ENCODE measurements at regions of chr6 and their contacts with region 1.

Region 1: DNA sequence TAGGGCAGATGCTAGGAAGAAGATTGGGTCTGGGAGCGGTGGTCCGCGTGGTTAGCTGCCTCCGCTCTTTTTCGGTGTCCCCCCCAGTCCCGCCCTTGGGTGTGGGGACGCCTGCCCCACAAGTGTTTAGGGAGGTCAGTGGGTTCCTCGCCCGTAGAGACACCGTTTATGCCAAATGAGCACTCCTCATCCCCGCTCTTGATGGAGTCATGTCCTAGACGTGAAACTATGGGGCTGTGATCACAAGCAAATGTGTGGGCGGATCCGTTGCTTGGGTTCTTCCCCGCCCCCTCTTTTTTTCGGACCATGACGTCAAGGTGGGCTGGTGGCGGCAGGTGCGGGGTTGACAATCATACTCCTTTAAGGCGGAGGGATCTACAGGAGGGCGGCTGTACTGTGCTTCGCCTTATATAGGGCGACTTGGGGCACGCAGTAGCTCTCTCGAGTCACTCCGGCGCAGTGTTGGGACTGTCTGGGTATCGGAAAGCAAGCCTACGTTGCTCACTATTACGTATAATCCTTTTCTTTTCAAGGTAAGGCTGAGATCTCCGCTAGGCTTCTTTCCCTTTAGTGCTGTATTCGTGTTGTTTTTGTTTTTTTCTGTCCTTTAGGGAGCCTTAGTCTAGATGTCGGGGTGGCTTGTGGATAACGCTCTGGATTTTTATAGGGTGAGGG is at the start of gene HSP90AB1:
- DNase-seq: peak; percentile 88
- ATAC-seq: peak; percentile 75
- H3K4me3 Mint-ChIP-seq: peak within 1 kb of the TSS; percentile 99
- H3K27ac Mint-ChIP-seq: peak within 1 kb of the TSS; percentile 99
- H3K4me1 Mint-ChIP-seq: peaks cover 56% of the 10 kb centered on the region
- H3K27me3 Mint-ChIP-seq: no peaks in the 10 kb centered on the region
- CTCF ChIP-seq: no peak
- total RNA-seq, gene HSP90AB1: 1,222 and 1,311 TPM in 2 replicates

Region 2: DNA sequence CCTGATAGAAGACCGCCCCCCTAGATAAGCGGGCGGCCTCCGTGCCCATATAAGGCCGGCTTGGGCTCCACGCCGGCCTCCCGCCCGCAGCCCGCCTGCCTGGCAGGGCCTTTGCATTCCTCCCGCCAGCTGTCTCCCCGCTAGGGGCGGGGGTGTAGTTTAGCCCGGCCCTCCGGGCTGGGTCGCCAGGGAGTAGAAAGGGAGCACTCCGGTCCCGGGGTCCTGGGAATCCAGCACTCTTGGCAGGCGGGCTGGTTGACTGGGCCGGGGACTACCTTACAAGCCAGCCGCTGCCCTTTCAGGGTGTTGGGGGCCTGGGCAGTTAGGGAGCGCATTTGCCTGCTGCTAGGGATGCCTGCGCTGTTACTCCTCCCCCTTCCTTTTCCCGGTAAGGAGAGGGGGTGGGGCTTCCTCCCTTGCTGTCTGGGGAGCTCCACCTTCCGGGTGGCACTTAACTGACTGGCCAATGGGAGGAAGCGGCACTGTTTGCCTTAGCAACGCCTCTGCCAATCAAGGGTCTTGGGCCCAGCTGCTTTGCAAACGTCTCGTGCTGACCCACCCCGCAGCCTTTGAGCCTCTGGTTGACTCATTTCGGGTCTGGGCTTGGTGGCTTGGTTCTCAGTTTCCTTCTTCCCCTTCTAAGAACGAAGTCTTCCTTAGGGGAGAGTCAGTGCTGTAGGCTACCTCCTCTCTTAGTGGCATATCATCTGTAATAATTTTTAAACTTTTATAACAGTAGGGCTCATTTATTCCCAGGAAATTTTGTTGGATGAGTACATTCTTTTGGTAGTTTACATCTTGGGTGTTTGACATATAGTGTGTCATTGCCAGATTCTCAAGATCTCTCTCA is 1072.3 kb before region 1 on chr6:
- CTCF ChIA-PET with region 1: no interaction called
- POLR2A ChIA-PET with region 1: no interaction called
- intact Hi-C with region 1: no loop called
- DNase-seq: peak; percentile 77
- ATAC-seq: peak; percentile 71
- H3K4me3 Mint-ChIP-seq: peak overlapping the region; percentile 73
- H3K27ac Mint-ChIP-seq: peak overlapping the region; percentile 90
- H3K4me1 Mint-ChIP-seq: peaks cover 48% of the 10 kb centered on the region
- H3K27me3 Mint-ChIP-seq: no peaks in the 10 kb centered on the region
- CTCF ChIP-seq: no peak

Region 3: DNA sequence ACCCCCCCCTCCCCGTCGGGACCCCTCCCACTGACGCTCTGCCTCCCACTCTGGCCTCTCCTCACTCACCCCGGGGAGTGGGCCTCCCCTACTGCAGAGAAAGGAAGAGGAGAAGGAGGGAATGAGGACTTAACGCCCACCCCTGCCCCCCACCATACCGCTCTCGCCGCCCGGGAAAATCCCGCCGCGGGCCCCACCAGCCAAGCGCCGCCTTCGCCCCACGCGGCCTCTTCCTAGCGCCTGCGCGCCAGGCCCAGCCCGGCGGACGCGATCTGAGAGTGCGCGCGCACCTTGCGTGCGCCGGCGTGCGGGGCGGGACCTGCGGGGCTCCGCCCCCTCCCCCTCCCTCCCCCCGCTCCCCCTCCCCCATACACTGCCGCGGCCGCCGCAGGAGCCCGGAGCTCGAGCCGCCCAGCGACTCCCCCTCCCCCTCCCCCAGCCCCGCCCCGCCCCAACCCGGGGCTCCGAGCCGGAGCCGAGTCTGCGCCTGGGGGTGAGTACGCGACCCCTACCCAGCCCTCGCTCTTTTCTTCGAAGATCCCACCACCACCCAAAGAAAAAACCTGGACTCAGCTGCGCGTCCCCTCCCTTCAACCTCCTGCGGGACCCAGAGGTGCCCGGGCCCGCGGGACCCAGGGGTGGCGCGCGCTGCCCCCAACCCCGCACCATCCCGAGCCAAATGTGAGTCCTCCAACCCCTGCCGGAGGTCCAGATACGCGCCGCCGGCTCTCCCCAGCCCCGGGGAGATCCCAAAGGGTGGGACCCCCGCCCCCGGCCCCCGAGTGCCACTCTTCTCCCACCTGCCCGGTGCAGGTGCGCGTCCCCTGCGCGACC is 119.4 kb before region 1 on chr6 and contains the starts of genes MRPL14 and TMEM63B:
- CTCF ChIA-PET with region 1: no interaction called
- POLR2A ChIA-PET with region 1: interaction called, 11 read pairs
- intact Hi-C with region 1: loop called (anchors 2 kb)
- DNase-seq: peak; percentile 89
- ATAC-seq: peak; percentile 87
- H3K4me3 Mint-ChIP-seq: peak within 1 kb of the TSS; percentile 93
- H3K27ac Mint-ChIP-seq: peak within 1 kb of the TSS; percentile 95
- H3K4me1 Mint-ChIP-seq: peaks cover 50% of the 10 kb centered on the region
- H3K27me3 Mint-ChIP-seq: no peaks in the 10 kb centered on the region
- CTCF ChIP-seq: no peak
- total RNA-seq, gene MRPL14: 40.5 and 45.5 TPM in 2 replicates
- total RNA-seq, gene TMEM63B: 12.3 and 13.9 TPM in 2 replicates

Region 4: GRCh38 chr6:44172731-44173500 is 73.9 kb before region 1 on chr6:
- CTCF ChIA-PET with region 1: interaction called, 3 read pairs
- POLR2A ChIA-PET with region 1: interaction called, 15 read pairs
- intact Hi-C with region 1: no loop called
- DNase-seq: peak; percentile 63
- ATAC-seq: peak; percentile 75
- H3K4me3 Mint-ChIP-seq: no peak overlapping the region
- H3K27ac Mint-ChIP-seq: no peak overlapping the region
- H3K4me1 Mint-ChIP-seq: peaks cover 14% of the 10 kb centered on the region
- H3K27me3 Mint-ChIP-seq: peaks cover 7% of the 10 kb centered on the region
- CTCF ChIP-seq: no peak

Region 5: GRCh38 chr6:44221291-44221960 is 25.4 kb before region 1 on chr6:
- CTCF ChIA-PET with region 1: no interaction called
- POLR2A ChIA-PET with region 1: interaction called, 49 read pairs
- intact Hi-C with region 1: loop called (anchors 1 kb)
- DNase-seq: peak; percentile 53
- ATAC-seq: peak; percentile 51
- H3K4me3 Mint-ChIP-seq: no peak overlapping the region
- H3K27ac Mint-ChIP-seq: no peak overlapping the region
- H3K4me1 Mint-ChIP-seq: peaks cover 39% of the 10 kb centered on the region
- H3K27me3 Mint-ChIP-seq: no peaks in the 10 kb centered on the region
- CTCF ChIP-seq: no peak

Region 6: GRCh38 chr6:44257025-44257752 is 10.4 kb after region 1 on chr6 and contains the start of gene SLC35B2:
- CTCF ChIA-PET with region 1: interaction called, 11 read pairs
- POLR2A ChIA-PET with region 1: interaction called, 549 read pairs
- intact Hi-C with region 1: loop called (anchors 1 kb)
- DNase-seq: peak; percentile 74
- ATAC-seq: peak; percentile 53
- H3K4me3 Mint-ChIP-seq: peak within 1 kb of the TSS; percentile 92
- H3K27ac Mint-ChIP-seq: peak within 1 kb of the TSS; percentile 99
- H3K4me1 Mint-ChIP-seq: peaks cover 88% of the 10 kb centered on the region
- H3K27me3 Mint-ChIP-seq: no peaks in the 10 kb centered on the region
- CTCF ChIP-seq: no peak
- total RNA-seq, gene SLC35B2: 27.0 and 29.1 TPM in 2 replicates

Region 7: DNA sequence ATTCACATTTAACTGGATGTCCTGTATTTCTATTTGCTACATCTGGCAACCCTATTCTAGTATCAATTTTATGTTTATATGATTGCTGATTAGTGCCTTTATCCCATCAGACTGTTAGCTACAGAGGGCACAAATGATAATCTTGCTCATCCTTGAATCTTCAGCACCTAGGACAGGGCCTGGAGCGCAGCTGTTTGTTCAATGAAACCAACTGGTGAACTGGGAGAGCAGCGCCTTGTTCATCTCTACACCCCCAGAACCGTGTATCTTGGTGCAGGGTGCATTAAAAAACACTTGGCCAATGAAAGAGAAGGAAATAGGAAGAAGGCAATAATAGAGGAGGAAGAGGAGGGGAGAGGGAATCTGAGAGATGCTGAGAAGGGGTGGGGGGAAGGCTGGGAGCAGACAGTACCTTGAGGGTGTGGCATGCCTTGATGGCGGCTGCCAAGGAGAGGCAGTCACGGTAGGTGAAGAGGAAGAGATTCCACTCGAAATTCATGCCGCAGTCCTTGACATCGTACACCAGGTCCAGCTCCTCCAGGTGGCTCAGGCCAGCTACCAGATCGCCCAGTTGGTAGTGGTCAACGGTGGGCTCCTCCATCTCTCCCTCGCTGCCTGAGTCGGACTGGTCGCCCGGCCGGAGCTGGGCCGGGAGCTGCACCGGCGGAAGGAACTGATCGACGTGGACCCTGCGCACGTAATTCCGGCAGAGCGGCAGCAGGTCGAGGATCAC is 38.9 kb after region 1 on chr6:
- CTCF ChIA-PET with region 1: no interaction called
- POLR2A ChIA-PET with region 1: no interaction called
- intact Hi-C with region 1: no loop called
- DNase-seq: no peak
- ATAC-seq: no peak
- H3K4me3 Mint-ChIP-seq: no peak overlapping the region
- H3K27ac Mint-ChIP-seq: no peak overlapping the region
- H3K4me1 Mint-ChIP-seq: no peaks in the 10 kb centered on the region
- H3K27me3 Mint-ChIP-seq: peaks cover 53% of the 10 kb centered on the region
- CTCF ChIP-seq: no peak

Region 8: GRCh38 chr6:44312901-44313788 is 66.3 kb after region 1 on chr6 and contains the start of gene AARS2:
- CTCF ChIA-PET with region 1: interaction called, 3 read pairs
- POLR2A ChIA-PET with region 1: interaction called, 18 read pairs
- intact Hi-C with region 1: loop called (anchors 2 kb)
- DNase-seq: peak; percentile 94
- ATAC-seq: peak; percentile 96
- H3K4me3 Mint-ChIP-seq: peak within 1 kb of the TSS; percentile 96
- H3K27ac Mint-ChIP-seq: peak within 1 kb of the TSS; percentile 91
- H3K4me1 Mint-ChIP-seq: peaks cover 14% of the 10 kb centered on the region
- H3K27me3 Mint-ChIP-seq: peaks cover 6% of the 10 kb centered on the region
- CTCF ChIP-seq: peak; percentile 85
- total RNA-seq, gene AARS2: 19.1 and 22.4 TPM in 2 replicates

Region 9: DNA sequence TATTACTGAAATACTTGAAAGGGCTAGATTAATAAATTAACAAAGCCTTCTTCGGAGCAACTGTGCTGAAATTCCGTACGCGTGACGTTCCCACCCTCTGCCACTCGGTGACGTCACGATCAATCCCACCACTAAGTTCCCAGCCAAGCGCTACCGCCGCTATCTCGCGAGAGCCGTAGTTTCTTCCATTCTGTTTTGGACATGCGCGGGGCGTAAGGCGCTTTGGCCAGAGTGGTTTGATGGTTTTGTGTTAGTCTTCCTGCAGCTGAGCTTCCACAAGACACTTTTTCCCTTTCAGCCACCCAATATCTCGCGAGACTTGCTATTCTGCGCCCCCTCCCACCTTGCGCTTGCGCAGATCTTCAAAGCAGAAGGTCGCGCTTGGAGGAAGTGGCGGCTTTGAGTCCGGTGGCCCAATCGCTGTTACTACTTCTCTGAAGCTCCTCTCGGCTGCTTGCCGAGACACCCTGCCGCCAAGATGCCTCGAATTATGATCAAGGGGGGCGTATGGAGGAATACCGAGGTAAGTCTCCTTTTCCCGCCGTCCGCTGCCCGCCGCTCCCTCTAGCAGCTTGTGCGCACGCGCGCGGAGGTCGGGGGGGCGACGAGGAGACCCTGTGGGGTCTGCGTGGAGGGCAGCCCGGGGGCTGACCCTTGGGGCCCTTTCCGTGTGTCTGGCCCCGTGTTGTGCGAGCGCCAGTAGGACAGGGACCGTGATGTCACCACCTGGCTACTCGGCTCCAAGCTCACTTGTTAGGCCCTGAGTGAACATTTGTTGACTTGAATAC is 140.7 kb after region 1 on chr6 and contains the start of gene CDC5L:
- CTCF ChIA-PET with region 1: no interaction called
- POLR2A ChIA-PET with region 1: interaction called, 13 read pairs
- intact Hi-C with region 1: no loop called
- DNase-seq: peak; percentile 82
- ATAC-seq: peak; percentile 91
- H3K4me3 Mint-ChIP-seq: peak within 1 kb of the TSS; percentile 94
- H3K27ac Mint-ChIP-seq: peak within 1 kb of the TSS; percentile 96
- H3K4me1 Mint-ChIP-seq: peaks cover 41% of the 10 kb centered on the region
- H3K27me3 Mint-ChIP-seq: no peaks in the 10 kb centered on the region
- CTCF ChIP-seq: no peak
- total RNA-seq, gene CDC5L: 20.0 and 20.2 TPM in 2 replicates

Region 10: GRCh38 chr6:44489910-44490604 is 243.3 kb after region 1 on chr6:
- CTCF ChIA-PET with region 1: no interaction called
- POLR2A ChIA-PET with region 1: no interaction called
- intact Hi-C with region 1: no loop called
- DNase-seq: no peak
- ATAC-seq: no peak
- H3K4me3 Mint-ChIP-seq: no peak overlapping the region
- H3K27ac Mint-ChIP-seq: no peak overlapping the region
- H3K4me1 Mint-ChIP-seq: no peaks in the 10 kb centered on the region
- H3K27me3 Mint-ChIP-seq: peaks cover 11% of the 10 kb centered on the region
- CTCF ChIP-seq: no peak

Region 11: DNA sequence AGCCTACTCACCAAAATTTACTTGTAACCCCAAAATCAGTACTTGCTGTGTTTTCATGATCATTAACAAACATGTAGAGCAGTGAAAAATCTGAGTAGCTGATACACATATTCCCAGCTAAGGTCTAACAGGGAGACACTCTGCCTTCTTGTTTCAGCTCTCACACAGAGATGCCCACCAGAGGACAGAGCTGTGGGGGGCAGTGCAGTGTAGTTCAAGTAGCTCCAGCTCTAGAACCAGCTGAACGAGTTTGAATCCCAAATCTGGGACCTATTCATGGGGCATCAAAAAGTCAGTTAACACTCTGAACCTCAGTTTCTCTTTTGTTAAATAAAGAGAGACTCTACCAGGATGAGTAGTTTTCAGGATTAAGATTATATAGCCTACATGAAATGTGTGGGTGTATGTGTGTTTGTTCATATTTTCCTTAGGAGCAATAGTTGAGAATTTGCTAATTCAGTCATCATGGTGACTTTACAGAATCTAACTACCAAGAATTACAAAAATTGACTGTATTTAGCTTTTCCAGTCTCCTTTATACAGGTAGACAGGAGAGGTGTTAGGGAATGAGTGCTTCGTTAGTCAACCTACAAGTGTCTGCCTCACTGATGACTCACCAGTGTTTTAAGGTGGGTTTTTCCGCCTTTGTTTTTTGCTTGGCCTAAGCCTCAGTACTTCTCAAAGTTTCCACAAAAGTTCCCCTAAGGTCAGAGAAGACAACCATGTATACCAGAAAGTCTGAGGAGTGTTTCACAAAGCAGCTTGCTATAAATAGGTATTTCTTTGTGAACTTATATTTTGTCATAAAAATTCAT is 917.4 kb after region 1 on chr6:
- CTCF ChIA-PET with region 1: no interaction called
- POLR2A ChIA-PET with region 1: no interaction called
- intact Hi-C with region 1: no loop called
- DNase-seq: no peak
- ATAC-seq: peak; percentile 77
- H3K4me3 Mint-ChIP-seq: no peak overlapping the region
- H3K27ac Mint-ChIP-seq: no peak overlapping the region
- H3K4me1 Mint-ChIP-seq: peaks cover 12% of the 10 kb centered on the region
- H3K27me3 Mint-ChIP-seq: no peaks in the 10 kb centered on the region
- CTCF ChIP-seq: no peak